IMR-90 (cell line): ENCODE measurements at regions of chr1 and their contacts with region 1.

Region 1: GRCh38 chr1:54810100-54810942 is 9.2 kb upstream of the TTC22 start:
- DNase-seq: peak; percentile 37
- ATAC-seq: peak; percentile 99
- H3K4me3 ChIP-seq: no peak overlapping the region
- H3K27ac ChIP-seq: no peak overlapping the region
- H3K4me1 ChIP-seq: no peaks in the 10 kb centered on the region
- H3K27me3 ChIP-seq: peaks cover 32% of the 10 kb centered on the region
- CTCF ChIP-seq: peak; percentile 94
- POLR2A ChIP-seq: peak; percentile 44; the same call in 1 of the 2 replicates
- RAD21 ChIP-seq: peak; percentile 96

Region 2: GRCh38 chr1:53847980-53848379 is 962.3 kb before region 1 on chr1:
- CTCF ChIA-PET with region 1: no interaction called
- POLR2A ChIA-PET with region 1: no interaction called
- dilution Hi-C with region 1: no loop called
- in situ Hi-C with region 1: no loop called
- intact Hi-C with region 1: loop called (anchors 10 kb)
- DNase-seq: no peak
- ATAC-seq: no peak
- H3K4me3 ChIP-seq: no peak overlapping the region
- H3K27ac ChIP-seq: no peak overlapping the region
- H3K4me1 ChIP-seq: no peaks in the 10 kb centered on the region
- H3K27me3 ChIP-seq: no peaks in the 10 kb centered on the region; the same call in 1 of the 2 replicates
- CTCF ChIP-seq: no peak
- POLR2A ChIP-seq: no peak
- RAD21 ChIP-seq: no peak

Region 3: GRCh38 chr1:54070171-54070837 is 740.0 kb before region 1 on chr1:
- CTCF ChIA-PET with region 1: no interaction called
- POLR2A ChIA-PET with region 1: no interaction called
- dilution Hi-C with region 1: no loop called
- in situ Hi-C with region 1: no loop called
- intact Hi-C with region 1: loop called (anchors 10 kb)
- DNase-seq: peak; percentile 67
- ATAC-seq: peak; percentile 97
- H3K4me3 ChIP-seq: no peak overlapping the region
- H3K27ac ChIP-seq: no peak overlapping the region
- H3K4me1 ChIP-seq: peaks cover 3% of the 10 kb centered on the region; the same call in 1 of the 2 replicates
- H3K27me3 ChIP-seq: no peaks in the 10 kb centered on the region
- CTCF ChIP-seq: peak; percentile 99
- POLR2A ChIP-seq: no peak
- RAD21 ChIP-seq: peak; percentile 88

Region 4: DNA sequence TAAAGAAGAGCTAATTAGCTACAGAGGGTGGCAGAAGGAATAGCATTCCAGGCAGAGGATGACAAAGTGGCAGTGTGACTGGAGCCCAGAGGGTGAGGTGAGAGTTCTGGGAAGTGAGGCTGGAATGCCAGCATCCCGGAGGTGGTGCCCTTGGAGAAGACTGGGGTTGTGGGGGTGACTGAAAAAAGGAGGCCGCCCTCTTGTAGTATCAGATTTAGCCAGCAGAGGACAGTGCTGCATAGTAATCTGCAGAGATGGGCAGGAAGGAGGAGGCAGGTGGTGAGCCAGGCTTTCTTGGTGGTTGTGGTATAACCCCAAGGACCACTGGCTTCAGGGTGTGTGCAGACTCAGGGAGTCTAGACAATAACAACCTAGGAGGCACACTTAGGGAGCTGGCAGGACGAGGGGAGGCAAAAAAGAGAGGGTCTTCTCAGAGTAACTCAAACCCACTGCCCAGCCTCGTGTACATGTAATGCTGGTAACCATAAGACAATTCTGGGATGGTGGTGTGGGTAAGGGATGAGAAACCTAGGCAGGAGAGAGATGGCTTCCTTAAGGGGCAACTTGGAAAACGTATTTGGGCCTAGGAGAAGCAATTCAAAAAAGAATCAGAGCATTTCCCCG is 138.2 kb before region 1 on chr1:
- CTCF ChIA-PET with region 1: interaction called, 5 read pairs
- POLR2A ChIA-PET with region 1: no interaction called
- dilution Hi-C with region 1: no loop called
- in situ Hi-C with region 1: loop called (anchors 10 kb)
- intact Hi-C with region 1: loop called (anchors 2 kb)
- DNase-seq: peak; percentile 50
- ATAC-seq: peak; percentile 99
- H3K4me3 ChIP-seq: no peak overlapping the region
- H3K27ac ChIP-seq: no peak overlapping the region
- H3K4me1 ChIP-seq: no peaks in the 10 kb centered on the region
- H3K27me3 ChIP-seq: peaks cover 31% of the 10 kb centered on the region
- CTCF ChIP-seq: peak; percentile 93
- POLR2A ChIP-seq: 0 out of 2 replicates have a peak, but pooled peaks have one; percentile 37
- RAD21 ChIP-seq: peak; percentile 93

Region 5: DNA sequence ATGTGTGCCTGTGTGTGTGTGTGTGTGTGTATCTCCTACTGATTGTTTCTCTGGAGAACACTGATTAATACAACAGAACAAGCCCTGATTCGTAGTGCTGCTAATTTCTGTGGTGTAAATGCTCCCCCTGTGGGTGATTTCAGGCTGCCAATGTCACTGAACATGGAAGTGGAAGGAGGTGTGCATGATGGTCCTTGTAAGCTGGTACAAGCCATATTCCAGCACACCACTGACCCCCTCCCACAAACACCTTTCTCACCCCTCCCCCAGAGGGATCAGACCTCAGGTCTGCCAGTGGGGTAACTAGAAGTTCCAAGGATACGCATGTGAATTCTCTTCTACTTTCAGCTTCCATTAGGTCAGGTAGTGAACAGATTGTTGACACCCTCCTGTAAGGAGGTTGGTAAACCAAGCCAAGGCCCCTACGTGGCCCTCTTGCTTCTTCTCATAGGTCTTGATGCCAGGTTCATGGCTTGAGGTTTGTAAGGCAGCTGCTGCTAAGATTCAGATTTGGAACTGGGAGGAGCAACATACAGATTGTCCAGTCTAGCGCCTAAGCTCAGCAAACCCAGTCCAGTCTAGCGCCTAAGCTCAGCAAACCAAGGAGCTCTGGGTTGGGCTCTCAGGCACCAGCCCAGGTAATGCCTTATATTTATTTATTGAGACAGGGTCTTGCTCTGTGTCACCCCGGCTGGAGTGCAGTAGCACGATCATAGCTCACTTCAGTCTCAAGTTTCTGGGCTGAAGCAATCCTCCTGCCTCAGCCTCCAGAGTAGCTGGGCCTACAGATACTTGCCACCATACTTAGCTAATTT is 38.0 kb after region 1 on chr1:
- CTCF ChIA-PET with region 1: no interaction called
- POLR2A ChIA-PET with region 1: no interaction called
- dilution Hi-C with region 1: no loop called
- in situ Hi-C with region 1: no loop called
- intact Hi-C with region 1: no loop called
- DNase-seq: no peak
- ATAC-seq: no peak
- H3K4me3 ChIP-seq: no peak overlapping the region
- H3K27ac ChIP-seq: no peak overlapping the region
- H3K4me1 ChIP-seq: peaks cover 15% of the 10 kb centered on the region
- H3K27me3 ChIP-seq: no peaks in the 10 kb centered on the region
- CTCF ChIP-seq: no peak
- POLR2A ChIP-seq: no peak
- RAD21 ChIP-seq: no peak